Tibial artery (tissue), 4 donors: ENCODE measurements at regions of chr13 and their contacts with region 1.

Region 1: GRCh38 chr13:50801087-50801931 is 42.2 kb downstream of the DLEU7 start:
- DNase-seq: peak in 1 of 2 donors; percentile 37
- H3K4me3 ChIP-seq: no peak overlapping the region
- H3K27ac ChIP-seq: no peak overlapping the region
- H3K4me1 ChIP-seq: peaks cover 0 to 5% (median 4%) of the 10 kb centered on the region in 4 donors
- H3K27me3 ChIP-seq: no peaks in the 10 kb centered on the region
- CTCF ChIP-seq: peak; percentile 57 to 62

Region 2: DNA sequence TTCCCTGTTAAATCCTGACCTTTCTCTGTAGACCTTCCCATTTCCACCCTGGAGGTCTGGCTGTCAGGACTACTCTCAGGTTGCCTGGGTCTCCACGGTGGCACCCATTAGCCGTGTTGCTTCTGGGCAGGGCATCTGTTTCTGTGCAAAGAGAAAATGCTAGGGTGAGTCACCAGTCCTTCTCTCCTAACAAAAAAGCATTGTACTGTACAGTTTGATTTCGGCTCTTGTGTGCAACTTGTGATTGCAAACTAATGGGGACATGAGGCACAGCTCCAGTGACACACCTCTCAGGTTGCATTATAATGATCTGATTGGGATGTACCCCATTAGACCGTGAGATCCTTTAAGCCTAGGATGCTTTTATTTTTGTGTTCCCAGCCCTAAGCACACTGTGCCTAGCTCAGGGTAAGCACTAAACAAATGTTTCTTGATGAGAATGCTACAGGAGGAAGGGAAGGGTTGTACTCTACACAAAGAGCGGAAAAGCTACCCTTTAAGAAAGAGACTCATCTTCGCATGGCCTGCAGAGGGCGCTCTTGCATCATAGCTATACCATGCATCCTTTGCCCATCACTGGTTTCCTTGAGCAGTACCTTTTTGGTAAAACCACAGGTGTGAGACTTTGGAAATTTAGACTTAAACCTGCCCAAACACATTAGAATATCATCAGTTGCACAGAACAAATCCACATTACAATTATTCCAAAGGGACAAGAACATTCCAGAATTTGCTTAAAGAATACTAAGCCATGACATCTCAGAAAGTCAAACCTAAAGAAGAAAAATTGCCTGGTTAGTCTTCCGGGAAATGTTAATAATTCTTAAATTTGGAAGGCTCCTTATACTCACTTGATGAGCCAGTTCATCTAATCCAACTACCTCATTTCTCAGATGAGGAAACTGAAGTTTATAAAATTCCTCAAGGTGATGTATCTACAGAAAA is 824.7 kb before region 1 on chr13:
- intact Hi-C with region 1: loop called (anchors 5 kb)
- DNase-seq: peak; percentile 60 to 70
- H3K4me3 ChIP-seq: no peak overlapping the region
- H3K27ac ChIP-seq: no peak overlapping the region
- H3K4me1 ChIP-seq: no peaks in the 10 kb centered on the region
- H3K27me3 ChIP-seq: no peaks in the 10 kb centered on the region
- CTCF ChIP-seq: peak; percentile 81 to 86

Region 3: DNA sequence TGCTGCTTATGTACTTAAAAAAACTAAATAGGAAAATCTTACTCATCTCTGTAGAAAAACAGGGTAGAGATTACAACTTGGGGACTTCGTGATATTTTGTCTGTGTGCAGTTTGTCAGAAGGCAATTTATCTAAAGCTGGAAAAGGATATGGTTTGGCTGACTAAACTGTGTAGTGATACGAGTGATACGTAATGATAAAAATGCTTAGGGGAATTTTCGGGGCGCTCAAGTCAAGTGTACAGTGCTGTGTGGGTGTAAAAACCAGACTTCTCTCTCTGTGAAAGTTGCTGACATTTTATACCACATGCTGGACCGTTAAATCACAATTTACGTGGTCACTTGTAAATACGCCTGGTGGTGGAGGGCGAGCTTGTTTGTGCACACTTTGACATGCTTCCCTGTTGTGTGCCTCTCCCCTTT is 564.4 kb before region 1 on chr13:
- intact Hi-C with region 1: no loop called
- DNase-seq: no peak
- H3K4me3 ChIP-seq: no peak overlapping the region
- H3K27ac ChIP-seq: no peak overlapping the region
- H3K4me1 ChIP-seq: no peaks in the 10 kb centered on the region
- H3K27me3 ChIP-seq: no peaks in the 10 kb centered on the region
- CTCF ChIP-seq: no peak

Region 4: DNA sequence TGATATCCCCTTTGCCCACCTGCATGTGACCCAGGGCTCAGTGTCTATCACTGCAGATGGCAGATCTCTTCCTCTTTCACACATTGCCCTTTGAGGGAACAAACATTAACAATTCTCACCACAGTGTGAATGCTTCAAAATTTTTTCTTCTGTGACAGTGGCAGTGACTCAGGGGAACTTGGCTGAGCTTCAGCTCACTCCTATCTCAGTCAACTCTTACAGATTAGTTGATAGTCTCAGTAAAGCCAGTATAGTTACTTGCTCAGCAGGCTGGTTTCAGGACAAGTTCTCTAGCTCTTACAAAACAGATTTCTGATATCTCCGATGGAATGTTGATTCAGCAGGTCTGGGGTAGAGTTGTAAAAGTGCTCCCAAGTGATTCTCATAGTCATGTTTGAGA is 124.7 kb before region 1 on chr13:
- intact Hi-C with region 1: no loop called
- DNase-seq: no peak
- H3K4me3 ChIP-seq: no peak overlapping the region
- H3K27ac ChIP-seq: no peak overlapping the region
- H3K4me1 ChIP-seq: peaks cover 0 to 7% (median 0%) of the 10 kb centered on the region in 4 donors
- H3K27me3 ChIP-seq: no peaks in the 10 kb centered on the region
- CTCF ChIP-seq: no peak

Region 5: GRCh38 chr13:50757008-50757407 is 44.3 kb before region 1 on chr13:
- intact Hi-C with region 1: no loop called
- DNase-seq: no peak
- H3K4me3 ChIP-seq: no peak overlapping the region
- H3K27ac ChIP-seq: no peak overlapping the region
- H3K4me1 ChIP-seq: no peaks in the 10 kb centered on the region
- H3K27me3 ChIP-seq: no peaks in the 10 kb centered on the region
- CTCF ChIP-seq: no peak